ENCODE measurements at regions of chr11 and their contacts with region 1.

Region 1: GRCh38 chr11:120688163-120688562 is 176.6 kb downstream of the GRIK4 start:
- DNase-seq: no peak
- ATAC-seq: no peak
- H3K4me3 ChIP-seq: no peak overlapping the region
- H3K27ac ChIP-seq: no peak overlapping the region
- H3K4me1 ChIP-seq: no peaks in the 10 kb centered on the region
- H3K27me3 ChIP-seq: peaks cover 0 to 37% (median 12%) of the 10 kb centered on the region in 9 donors
- CTCF ChIP-seq: no peak
- POLR2A ChIP-seq: no peak

Region 2: DNA sequence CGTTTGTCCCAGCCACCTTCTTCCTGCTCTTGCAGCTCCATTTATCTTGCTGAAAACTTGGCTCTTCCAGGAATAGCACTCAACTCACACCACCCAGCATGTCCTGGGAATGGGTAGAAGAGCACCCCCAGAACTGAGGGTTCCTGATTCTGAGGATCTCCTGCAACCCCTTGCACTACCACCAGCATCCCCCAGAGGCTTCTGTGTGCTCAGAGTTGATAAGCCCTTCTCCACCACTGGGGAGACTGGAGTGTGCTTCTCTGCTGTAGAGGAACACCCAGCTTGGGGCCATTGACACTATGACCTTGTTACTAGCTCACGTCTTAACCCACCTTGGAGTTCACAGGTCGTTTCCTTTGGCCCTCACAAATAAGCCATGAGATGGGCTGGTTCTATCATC is 55.6 kb before region 1 on chr11:
- intact Hi-C with region 1: loop called in 1 of 10 experiments (anchors 2 kb)
- DNase-seq: no peak
- ATAC-seq: no peak
- H3K4me3 ChIP-seq: no peak overlapping the region
- H3K27ac ChIP-seq: no peak overlapping the region
- H3K4me1 ChIP-seq: no peaks in the 10 kb centered on the region
- H3K27me3 ChIP-seq: peaks cover 0 to 17% (median 0%) of the 10 kb centered on the region in 9 donors
- CTCF ChIP-seq: no peak
- POLR2A ChIP-seq: no peak

Region 3: GRCh38 chr11:120723751-120724150 is 35.6 kb after region 1 on chr11:
- intact Hi-C with region 1: no loop called
- DNase-seq: no peak
- ATAC-seq: no peak
- H3K4me3 ChIP-seq: no peak overlapping the region
- H3K27ac ChIP-seq: no peak overlapping the region
- H3K4me1 ChIP-seq: no peaks in the 10 kb centered on the region
- H3K27me3 ChIP-seq: peaks cover 0 to 31% (median 0%) of the 10 kb centered on the region in 9 donors
- CTCF ChIP-seq: no peak
- POLR2A ChIP-seq: no peak

Region 4: DNA sequence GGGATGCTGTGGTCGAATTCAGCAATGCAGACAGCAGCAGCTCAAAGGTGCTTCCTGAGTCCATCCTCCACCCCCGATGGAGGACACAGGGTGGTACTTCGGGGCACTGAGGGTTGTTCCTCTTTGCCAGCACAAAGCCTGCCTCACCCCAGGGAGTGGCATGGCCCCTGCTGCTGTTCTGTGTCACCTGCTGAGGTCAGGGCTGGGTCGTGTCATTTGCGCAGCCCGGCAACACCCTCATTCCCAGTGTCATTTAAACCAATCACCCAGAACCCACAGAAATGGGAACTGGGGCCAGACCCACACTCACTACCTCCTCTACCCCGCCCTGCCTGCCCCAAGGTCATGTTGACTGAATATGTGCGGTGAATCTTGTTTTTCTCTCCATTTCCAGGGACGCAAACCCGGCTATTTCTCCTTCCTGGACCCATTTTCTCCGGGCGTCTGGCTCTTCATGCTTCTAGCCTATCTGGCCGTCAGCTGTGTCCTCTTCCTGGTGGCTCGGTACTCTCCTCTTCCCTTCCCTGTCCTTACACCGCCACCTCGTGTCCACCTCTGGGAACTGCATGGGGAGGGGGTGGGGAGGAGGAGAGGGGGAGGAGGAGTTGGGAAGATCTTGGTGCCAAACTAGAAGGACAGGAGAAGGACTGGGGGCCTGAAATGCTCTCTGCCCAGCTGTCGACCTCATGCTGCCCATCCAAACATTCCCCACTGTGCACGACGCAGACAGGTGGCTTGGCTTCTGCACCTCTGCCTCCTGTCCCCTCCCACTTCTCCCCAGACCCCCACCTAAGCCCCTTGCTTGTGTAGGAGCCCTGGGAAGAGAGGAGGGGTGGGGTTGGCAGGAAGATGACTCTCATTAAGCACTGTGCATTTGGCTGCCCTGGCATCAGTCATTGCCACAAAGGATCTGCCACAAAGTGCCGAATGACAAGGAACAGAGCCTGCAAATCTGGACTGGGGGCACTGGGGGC is 264.6 kb after region 1 on chr11:
- intact Hi-C with region 1: loop called in 8 of 10 experiments (anchors 5 to 10 kb)
- DNase-seq: peak; percentile 70 to 89 (median 72)
- ATAC-seq: peak; percentile 75 to 96 (median 92)
- H3K4me3 ChIP-seq: peak overlapping the region in 6 of 12 donors; percentile 9 to 38 (median 26)
- H3K27ac ChIP-seq: peak overlapping the region in 3 of 12 donors; percentile 28 to 39 (median 38)
- H3K4me1 ChIP-seq: peaks cover 0 to 12% (median 3%) of the 10 kb centered on the region in 12 donors
- H3K27me3 ChIP-seq: peaks cover 0 to 20% (median 3%) of the 10 kb centered on the region in 9 donors
- CTCF ChIP-seq: peak; percentile 47 to 81 (median 68)
- POLR2A ChIP-seq: no peak

Measured in heart left ventricle (tissue), 16 donors.